ENCODE measurements at regions of chr16 and their contacts with region 1.

Region 1: GRCh38 chr16:48609652-48610029 is 339 bp downstream of the N4BP1 start:
- DNase-seq: no peak
- H3K4me3 Mint-ChIP-seq: no peak overlapping the region
- H3K27ac Mint-ChIP-seq: no peak overlapping the region
- H3K4me1 Mint-ChIP-seq: peaks cover 42% of the 10 kb centered on the region
- H3K27me3 Mint-ChIP-seq: no peaks in the 10 kb centered on the region

Region 2: DNA sequence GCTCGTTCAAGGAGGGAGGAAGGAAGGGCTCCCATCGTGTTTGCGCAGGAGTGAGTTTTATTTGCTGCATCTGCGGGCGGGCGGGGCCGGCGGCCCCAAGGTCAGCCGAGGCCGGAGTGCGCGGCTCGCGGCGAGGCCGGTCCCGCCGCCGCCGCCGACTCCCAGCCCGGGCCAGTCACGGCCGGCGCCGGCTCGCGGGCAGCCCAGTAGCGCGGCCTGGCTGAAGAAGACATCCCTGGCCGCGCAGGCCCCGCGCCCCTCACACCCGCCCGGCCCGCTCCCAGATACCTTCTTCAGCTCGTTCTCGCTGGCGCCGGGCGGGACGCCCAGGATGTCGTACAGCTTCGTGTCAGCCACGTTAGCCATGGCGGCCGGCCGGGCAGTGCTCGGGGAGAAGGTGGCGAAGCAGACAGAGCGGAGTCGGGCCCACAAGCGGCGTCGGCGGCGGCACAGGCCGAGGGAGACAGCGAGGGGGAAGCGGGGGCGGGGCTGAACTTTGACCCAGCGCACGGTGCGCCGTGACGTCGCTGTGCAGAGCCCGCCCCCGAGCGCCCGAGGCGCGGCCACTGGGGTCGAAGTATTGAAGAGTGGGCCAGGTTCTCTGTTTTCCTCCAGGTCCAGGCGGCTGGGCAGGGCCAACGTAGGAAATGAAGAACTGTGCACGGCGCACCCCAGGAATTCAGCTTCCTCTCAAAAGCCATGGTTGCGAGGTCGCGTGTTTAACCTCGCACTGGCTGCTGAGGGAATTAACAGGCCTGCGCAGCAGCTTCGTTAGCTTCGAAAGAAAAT is 1636.2 kb before region 1 on chr16 and contains the start of gene DNAJA2:
- CTCF ChIA-PET with region 1: no interaction called
- POLR2A ChIA-PET with region 1: no interaction called
- intact Hi-C with region 1: loop called (anchors 10 kb)
- DNase-seq: peak; percentile 94
- H3K4me3 Mint-ChIP-seq: peak within 1 kb of the TSS; percentile 98
- H3K27ac Mint-ChIP-seq: peak within 1 kb of the TSS; percentile 98
- H3K4me1 Mint-ChIP-seq: peaks cover 59% of the 10 kb centered on the region
- H3K27me3 Mint-ChIP-seq: no peaks in the 10 kb centered on the region
- total RNA-seq, gene DNAJA2: 78.9 to 80.6 TPM

Region 3: GRCh38 chr16:48365581-48366164 is 244.0 kb before region 1 on chr16:
- CTCF ChIA-PET with region 1: interaction called, 3 read pairs
- POLR2A ChIA-PET with region 1: interaction called, 4 read pairs
- intact Hi-C with region 1: loop called (anchors 1 kb)
- DNase-seq: peak; percentile 91
- H3K4me3 Mint-ChIP-seq: peak overlapping the region; percentile 85
- H3K27ac Mint-ChIP-seq: peak overlapping the region; percentile 94
- H3K4me1 Mint-ChIP-seq: peaks cover 41% of the 10 kb centered on the region
- H3K27me3 Mint-ChIP-seq: no peaks in the 10 kb centered on the region

Region 4: GRCh38 chr16:48409839-48410611 is 199.6 kb before region 1 on chr16:
- CTCF ChIA-PET with region 1: no interaction called
- POLR2A ChIA-PET with region 1: no interaction called
- intact Hi-C with region 1: no loop called
- DNase-seq: no peak
- H3K4me3 Mint-ChIP-seq: no peak overlapping the region
- H3K27ac Mint-ChIP-seq: no peak overlapping the region
- H3K4me1 Mint-ChIP-seq: peaks cover 6% of the 10 kb centered on the region
- H3K27me3 Mint-ChIP-seq: peaks cover 8% of the 10 kb centered on the region

Region 5: DNA sequence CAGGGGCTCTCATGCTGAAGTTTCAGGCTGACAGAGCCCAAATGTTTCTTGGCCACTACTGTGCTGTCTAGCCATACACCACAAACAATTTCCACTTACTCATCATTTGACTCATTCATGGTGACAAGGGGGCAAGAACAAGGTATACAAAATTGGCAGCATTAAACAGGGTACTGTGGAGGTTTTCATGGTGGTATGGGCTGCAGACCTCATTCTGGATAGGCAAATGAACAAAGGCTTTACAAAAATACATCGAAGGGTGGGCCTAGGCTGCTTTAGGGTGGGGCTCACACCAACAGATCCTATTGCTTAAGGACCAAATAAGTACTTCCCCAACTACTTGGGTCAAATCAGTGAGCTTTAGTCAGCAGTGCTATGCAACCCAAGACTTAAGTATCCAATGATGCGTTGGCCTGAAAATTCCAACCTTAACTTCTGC is 52.7 kb before region 1 on chr16:
- CTCF ChIA-PET with region 1: interaction called, 6 read pairs
- POLR2A ChIA-PET with region 1: no interaction called
- intact Hi-C with region 1: loop called (anchors 1 kb)
- DNase-seq: peak; percentile 52
- H3K4me3 Mint-ChIP-seq: no peak overlapping the region
- H3K27ac Mint-ChIP-seq: peak overlapping the region; percentile 63
- H3K4me1 Mint-ChIP-seq: peaks cover 80% of the 10 kb centered on the region
- H3K27me3 Mint-ChIP-seq: no peaks in the 10 kb centered on the region

Region 6: GRCh38 chr16:48596326-48596725 is 13.3 kb before region 1 on chr16:
- CTCF ChIA-PET with region 1: no interaction called
- POLR2A ChIA-PET with region 1: interaction called, 4 read pairs
- intact Hi-C with region 1: loop called (anchors 1 kb)
- DNase-seq: peak; percentile 77
- H3K4me3 Mint-ChIP-seq: no peak overlapping the region
- H3K27ac Mint-ChIP-seq: peak overlapping the region; percentile 64
- H3K4me1 Mint-ChIP-seq: peaks cover 54% of the 10 kb centered on the region
- H3K27me3 Mint-ChIP-seq: no peaks in the 10 kb centered on the region

Region 7: GRCh38 chr16:50152807-50153452 is 1543.3 kb after region 1 on chr16 and contains the start of gene TENT4B:
- CTCF ChIA-PET with region 1: no interaction called
- POLR2A ChIA-PET with region 1: no interaction called
- intact Hi-C with region 1: loop called (anchors 5 kb)
- DNase-seq: peak; percentile 90
- H3K4me3 Mint-ChIP-seq: peak within 1 kb of the TSS; percentile 80
- H3K27ac Mint-ChIP-seq: peak within 1 kb of the TSS; percentile 91
- H3K4me1 Mint-ChIP-seq: peaks cover 32% of the 10 kb centered on the region
- H3K27me3 Mint-ChIP-seq: no peaks in the 10 kb centered on the region
- total RNA-seq, gene TENT4B: 14.4 to 14.8 TPM

Region 8: DNA sequence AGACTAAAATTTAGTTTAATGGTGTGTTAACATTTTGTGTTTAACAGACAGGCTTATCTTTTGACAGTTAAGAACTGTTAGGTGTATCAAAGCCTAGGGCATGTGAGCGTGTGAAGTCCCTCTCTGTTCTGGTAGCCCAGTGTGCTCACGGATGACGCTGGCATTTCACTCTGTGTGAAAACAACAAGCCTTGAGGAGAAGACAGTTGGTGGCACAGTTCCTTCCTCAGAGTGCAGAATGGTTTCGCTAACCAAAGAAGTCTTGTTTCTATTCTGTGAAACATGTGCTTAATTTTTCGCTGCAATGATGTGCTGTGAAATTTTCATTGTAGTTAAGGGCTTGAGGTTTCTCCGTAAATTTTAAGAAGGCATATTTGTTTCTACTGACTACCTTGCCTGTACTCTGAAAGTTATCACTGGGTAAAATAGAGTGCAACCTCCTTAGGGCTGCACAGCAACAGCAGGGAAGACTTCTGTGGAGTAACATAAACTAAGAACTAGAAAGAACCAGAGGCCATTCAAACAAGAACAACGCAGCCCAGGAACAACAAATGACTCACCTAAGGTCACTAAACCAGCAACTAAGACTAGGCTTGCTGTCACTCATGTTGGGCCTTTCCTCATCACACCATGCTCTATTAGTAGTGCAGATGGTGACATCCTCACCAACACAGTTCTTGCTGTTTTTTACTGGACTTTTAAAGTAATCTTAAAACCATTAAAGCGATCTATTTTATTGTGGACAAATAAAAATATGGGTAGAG is 1725.7 kb after region 1 on chr16:
- CTCF ChIA-PET with region 1: no interaction called
- POLR2A ChIA-PET with region 1: no interaction called
- intact Hi-C with region 1: loop called (anchors 5 kb)
- DNase-seq: peak; percentile 70
- H3K4me3 Mint-ChIP-seq: peak overlapping the region; percentile 32
- H3K27ac Mint-ChIP-seq: peak overlapping the region; percentile 90
- H3K4me1 Mint-ChIP-seq: peaks cover 68% of the 10 kb centered on the region
- H3K27me3 Mint-ChIP-seq: no peaks in the 10 kb centered on the region

Measured in activated CD4-positive, alpha-beta memory T cell treated with anti-CD3 and anti-CD28 coated beads for 36 hours (primary cell).